PC-3 (cell line): ENCODE measurements at regions of chr2 and their contacts with region 1.

Region 1: GRCh38 chr2:195656859-195657633 is at the start of gene SLC39A10:
- DNase-seq: peak; percentile 99
- ATAC-seq: peak; percentile 79
- H3K4me3 ChIP-seq: peak within 1 kb of the TSS; percentile 88
- H3K27ac ChIP-seq: peak within 1 kb of the TSS; percentile 78
- H3K4me1 ChIP-seq: peaks cover 25% of the 10 kb centered on the region
- H3K27me3 ChIP-seq: no peaks in the 10 kb centered on the region
- CTCF ChIP-seq: no peak
- total RNA-seq, gene SLC39A10: 18.6 and 19.9 TPM in 2 replicates

Region 2: DNA sequence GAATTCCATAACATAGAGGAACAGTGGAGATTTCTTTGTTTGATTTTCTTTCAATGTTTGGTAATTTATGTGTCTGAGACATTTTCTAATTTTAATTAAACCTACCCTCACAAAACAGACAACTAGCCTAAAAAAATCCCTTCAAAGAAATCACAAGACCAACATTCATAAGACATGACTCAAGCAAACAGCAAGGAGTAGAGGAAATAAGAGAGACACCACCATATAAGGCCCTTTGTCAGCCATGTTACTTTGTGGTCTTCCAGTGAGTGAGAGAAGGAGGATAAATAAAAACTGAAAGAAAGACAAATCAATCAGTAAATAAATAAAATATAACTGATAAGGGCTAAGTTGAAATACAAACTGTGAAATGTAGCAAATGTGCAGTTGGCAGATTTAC is 830.8 kb before region 1 on chr2:
- CTCF ChIA-PET with region 1: no interaction called
- POLR2A ChIA-PET with region 1: no interaction called
- intact Hi-C with region 1: loop called (anchors 10 kb)
- DNase-seq: no peak
- ATAC-seq: no peak
- H3K4me3 ChIP-seq: no peak overlapping the region
- H3K27ac ChIP-seq: no peak overlapping the region
- H3K4me1 ChIP-seq: no peaks in the 10 kb centered on the region; the same call in 1 of the 2 replicates
- H3K27me3 ChIP-seq: no peaks in the 10 kb centered on the region
- CTCF ChIP-seq: no peak

Region 3: GRCh38 chr2:195410074-195410671 is 246.9 kb before region 1 on chr2:
- CTCF ChIA-PET with region 1: no interaction called
- POLR2A ChIA-PET with region 1: no interaction called
- intact Hi-C with region 1: loop called (anchors 2 kb)
- DNase-seq: no peak
- ATAC-seq: no peak
- H3K4me3 ChIP-seq: no peak overlapping the region
- H3K27ac ChIP-seq: no peak overlapping the region
- H3K4me1 ChIP-seq: peaks cover 23% of the 10 kb centered on the region
- H3K27me3 ChIP-seq: no peaks in the 10 kb centered on the region
- CTCF ChIP-seq: no peak

Region 4: GRCh38 chr2:195533771-195534642 is 123.0 kb before region 1 on chr2:
- CTCF ChIA-PET with region 1: interaction called, 13 read pairs
- POLR2A ChIA-PET with region 1: no interaction called
- intact Hi-C with region 1: loop called (anchors 2 kb)
- DNase-seq: peak; percentile 66
- ATAC-seq: peak; percentile 92
- H3K4me3 ChIP-seq: no peak overlapping the region
- H3K27ac ChIP-seq: peak overlapping the region; percentile 54
- H3K4me1 ChIP-seq: peaks cover 23% of the 10 kb centered on the region
- H3K27me3 ChIP-seq: no peaks in the 10 kb centered on the region
- CTCF ChIP-seq: no peak; the same call in 1 of the 2 replicates

Region 5: GRCh38 chr2:195561203-195562032 is 95.6 kb before region 1 on chr2:
- CTCF ChIA-PET with region 1: interaction called, 9 read pairs
- POLR2A ChIA-PET with region 1: interaction called, 13 read pairs
- intact Hi-C with region 1: loop called (anchors 1 kb)
- DNase-seq: peak; percentile 95
- ATAC-seq: peak; percentile 64
- H3K4me3 ChIP-seq: no peak overlapping the region
- H3K27ac ChIP-seq: peak overlapping the region; percentile 96
- H3K4me1 ChIP-seq: peaks cover 64% of the 10 kb centered on the region
- H3K27me3 ChIP-seq: no peaks in the 10 kb centered on the region
- CTCF ChIP-seq: no peak

Region 6: GRCh38 chr2:195779491-195779890 is 122.4 kb after region 1 on chr2:
- CTCF ChIA-PET with region 1: no interaction called
- POLR2A ChIA-PET with region 1: no interaction called
- intact Hi-C with region 1: no loop called
- DNase-seq: peak; percentile 66
- ATAC-seq: peak; percentile 99
- H3K4me3 ChIP-seq: no peak overlapping the region
- H3K27ac ChIP-seq: no peak overlapping the region
- H3K4me1 ChIP-seq: peaks cover 8% of the 10 kb centered on the region; the same call in 1 of the 2 replicates
- H3K27me3 ChIP-seq: no peaks in the 10 kb centered on the region
- CTCF ChIP-seq: peak; percentile 50; the same call in 1 of the 2 replicates